ENCODE measurements at regions of chr11 and their contacts with region 1.

Region 1: DNA sequence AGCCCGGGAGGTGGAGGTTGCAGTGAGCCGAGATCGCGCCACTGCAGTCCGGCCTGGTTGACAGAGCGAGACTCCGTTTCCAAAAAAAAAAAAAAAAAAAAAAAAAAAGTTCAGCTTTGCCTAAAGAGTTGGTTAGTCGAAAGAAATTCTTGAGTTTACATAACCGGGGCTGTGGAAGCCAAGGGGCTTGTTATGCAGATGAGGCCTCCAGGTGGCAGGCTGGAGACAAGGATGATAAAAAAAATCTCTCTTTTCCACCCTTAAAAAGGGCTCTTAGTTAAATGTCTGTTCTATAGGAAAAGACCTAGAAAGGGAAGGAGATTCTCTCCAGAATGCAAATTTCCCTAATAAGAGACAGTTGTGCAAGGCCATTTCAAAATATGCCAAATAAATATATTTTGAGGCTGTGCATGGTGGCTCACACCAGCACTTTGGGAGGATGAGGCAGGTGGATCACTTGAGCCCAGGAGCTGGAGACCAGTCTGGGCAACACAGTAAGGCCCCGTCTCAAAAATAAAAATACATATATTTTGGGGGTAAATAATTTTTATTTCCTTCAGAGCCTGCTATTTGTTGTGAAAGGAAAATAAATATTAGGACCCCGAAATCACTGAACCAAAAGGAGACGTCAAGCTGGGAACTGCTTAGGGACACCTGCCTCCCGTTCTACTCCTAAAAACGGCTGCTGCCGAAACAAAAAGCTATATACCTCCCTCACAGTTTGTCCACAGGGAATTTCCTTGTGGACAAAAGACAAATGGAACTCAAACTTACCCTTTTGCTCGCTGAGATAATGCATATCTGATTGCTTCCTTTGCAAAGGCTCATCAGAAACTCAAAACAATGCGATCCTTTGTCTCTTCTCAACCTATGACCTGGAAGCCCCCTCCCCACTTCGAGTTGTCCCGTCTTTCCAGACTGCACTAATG is 2.4 kb upstream of the IFITM2 start:
- DNase-seq: no peak
- H3K4me3 ChIP-seq: no peak overlapping the region
- H3K27ac ChIP-seq: peak overlapping the region in 1 of 4 donors; percentile 93
- H3K4me1 ChIP-seq: peaks cover 10 to 56% (median 27%) of the 10 kb centered on the region in 3 donors
- H3K27me3 ChIP-seq: peaks cover 0 to 18% (median 0%) of the 10 kb centered on the region in 4 donors
- CTCF ChIP-seq: peak; percentile 37 to 84 (median 72)
- POLR2A ChIP-seq: no peak

Region 2: DNA sequence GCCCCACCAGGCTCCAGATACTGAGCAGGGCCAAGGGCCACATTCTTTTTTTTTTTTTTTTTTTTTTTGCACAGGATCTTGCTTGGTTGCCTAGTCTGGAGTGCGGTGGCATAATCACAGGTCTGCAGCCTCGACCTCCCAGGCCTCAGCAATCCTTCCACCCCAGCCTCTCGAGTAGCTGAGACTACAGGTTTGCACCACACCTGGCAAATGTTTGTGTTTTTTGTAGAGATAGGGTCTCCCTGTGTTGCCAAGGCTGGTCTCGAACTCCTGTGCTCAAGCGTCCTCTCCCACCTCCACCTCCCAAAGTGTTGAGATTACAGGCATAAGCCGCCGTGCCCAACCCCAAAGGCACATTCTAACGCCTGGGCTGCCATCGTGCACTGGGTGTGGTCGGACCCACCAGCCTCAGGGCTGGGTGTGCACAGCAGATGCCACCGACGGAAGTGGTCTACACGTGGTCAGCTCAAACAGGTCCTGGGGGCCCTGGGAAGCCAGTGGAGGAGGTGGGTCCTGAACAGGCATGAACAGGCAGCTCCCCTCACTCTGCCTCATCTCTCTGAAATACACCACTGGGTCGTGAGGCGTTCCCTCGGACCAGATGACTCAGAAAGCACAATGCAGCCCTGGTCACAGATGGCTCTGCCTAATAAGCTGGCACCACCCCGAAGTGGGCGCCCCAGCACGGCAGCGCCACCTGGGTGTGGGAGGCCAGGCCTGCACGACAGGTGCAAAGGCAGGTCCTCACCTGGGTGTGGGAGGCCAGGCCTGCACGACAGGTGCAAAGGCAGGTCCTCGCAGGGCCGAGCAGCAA is 59.0 kb after region 1 on chr11:
- intact Hi-C with region 1: loop called (anchors 5 kb)
- DNase-seq: no peak
- H3K4me3 ChIP-seq: peak overlapping the region in 1 of 4 donors; percentile 19
- H3K27ac ChIP-seq: peak overlapping the region in 3 of 4 donors; percentile 48 to 68 (median 55)
- H3K4me1 ChIP-seq: peaks cover 11 to 30% (median 13%) of the 10 kb centered on the region in 3 donors
- H3K27me3 ChIP-seq: peaks cover 6 to 69% (median 13%) of the 10 kb centered on the region in 4 donors
- CTCF ChIP-seq: peak; percentile 40 to 91 (median 82)
- POLR2A ChIP-seq: no peak

Region 3: DNA sequence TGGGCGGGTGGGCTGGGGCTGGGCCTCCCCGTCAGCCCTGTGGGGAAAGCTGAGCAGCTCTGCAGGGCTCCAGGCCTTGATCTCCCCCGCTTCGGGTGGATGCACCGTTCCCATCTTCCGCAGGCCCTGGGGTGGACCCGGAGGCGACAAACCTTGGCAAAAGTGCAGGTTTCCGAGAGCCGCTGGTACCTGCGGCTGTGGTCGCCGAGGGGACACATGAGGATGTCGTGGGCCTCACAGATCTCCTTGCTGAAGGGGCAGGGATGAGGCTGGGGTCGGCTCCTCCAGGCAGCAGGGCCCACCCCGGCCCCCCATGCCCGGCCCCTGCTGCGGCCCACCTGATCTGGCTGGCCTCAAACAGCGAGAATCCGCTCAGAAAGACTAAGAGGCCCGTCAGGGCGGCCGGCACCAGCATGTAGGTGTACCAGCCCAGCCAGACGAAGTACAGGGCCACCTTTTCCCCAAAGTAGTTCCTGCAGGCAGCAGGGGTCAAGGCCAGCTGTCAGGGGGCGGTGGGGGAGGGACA is 124.8 kb after region 1 on chr11:
- intact Hi-C with region 1: no loop called
- DNase-seq: no peak
- H3K4me3 ChIP-seq: no peak overlapping the region
- H3K27ac ChIP-seq: no peak overlapping the region
- H3K4me1 ChIP-seq: no peaks in the 10 kb centered on the region
- H3K27me3 ChIP-seq: no peaks in the 10 kb centered on the region
- CTCF ChIP-seq: no peak
- POLR2A ChIP-seq: no peak